ENCODE measurements at regions of chr7 and their contacts with region 1.

Region 1: DNA sequence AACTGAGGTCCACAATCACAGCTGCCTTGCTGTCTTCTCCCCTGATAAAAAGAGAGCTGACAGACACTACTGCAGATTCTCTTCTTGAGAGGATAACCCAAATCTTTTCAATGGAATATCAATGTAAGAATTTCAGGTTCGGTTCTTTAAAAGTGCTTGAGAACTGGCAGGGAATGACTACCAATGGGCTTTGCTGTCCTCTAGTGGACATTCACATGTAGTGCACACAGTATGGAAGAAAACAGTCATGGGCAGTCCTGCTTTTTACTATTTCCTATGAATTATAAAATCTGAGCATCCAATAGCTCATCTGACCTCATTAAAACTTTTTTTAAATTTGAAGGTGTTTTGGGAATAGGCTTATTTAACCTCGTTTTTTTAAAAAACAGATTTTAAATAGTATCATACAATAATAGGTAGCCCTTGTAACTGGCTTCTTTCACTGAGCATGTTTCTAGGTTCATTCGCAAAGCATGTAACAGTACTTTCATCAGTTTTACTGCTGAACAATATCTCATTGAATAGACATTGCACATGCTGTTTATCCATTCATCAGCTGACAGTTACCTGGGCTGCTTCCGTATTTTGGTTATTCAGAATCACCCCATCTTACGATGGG is 18.3 kb downstream of the FZD9 start:
- DNase-seq: peak; percentile 68
- ATAC-seq: peak; percentile 78
- H3K4me3 ChIP-seq: no peak overlapping the region
- H3K27ac ChIP-seq: no peak overlapping the region; the same call in 1 of the 2 replicates
- H3K4me1 ChIP-seq: no peaks in the 10 kb centered on the region
- H3K27me3 ChIP-seq: no peaks in the 10 kb centered on the region
- CTCF ChIP-seq: peak; percentile 94

Region 2: GRCh38 chr7:73342645-73343044 is 109.2 kb before region 1 on chr7:
- CTCF ChIA-PET with region 1: interaction called, 6 read pairs
- POLR2A ChIA-PET with region 1: interaction called, 5 read pairs
- in situ Hi-C with region 1: no loop called
- intact Hi-C with region 1: loop called (anchors 5 kb)
- DNase-seq: peak; percentile 28
- ATAC-seq: peak; percentile 91
- H3K4me3 ChIP-seq: 0 out of 4 replicates have a peak overlapping the region, but pooled peaks of 1 of the 2 experiments have one; percentile 2
- H3K27ac ChIP-seq: no peak overlapping the region
- H3K4me1 ChIP-seq: no peaks in the 10 kb centered on the region
- H3K27me3 ChIP-seq: no peaks in the 10 kb centered on the region
- CTCF ChIP-seq: peak; percentile 75; the same call in 1 of the 2 replicates

Region 3: GRCh38 chr7:75054744-75055143 is 1602.9 kb after region 1 on chr7:
- CTCF ChIA-PET with region 1: no interaction called
- POLR2A ChIA-PET with region 1: interaction called, 12 read pairs
- in situ Hi-C with region 1: no loop called
- intact Hi-C with region 1: no loop called
- DNase-seq: no peak
- ATAC-seq: 0 out of 2 replicates have a peak, but pooled peaks have one; percentile 27
- H3K4me3 ChIP-seq: no peak overlapping the region
- H3K27ac ChIP-seq: no peak overlapping the region
- H3K4me1 ChIP-seq: no peaks in the 10 kb centered on the region
- H3K27me3 ChIP-seq: no peaks in the 10 kb centered on the region
- CTCF ChIP-seq: no peak